Common myeloid progenitor, CD34-positive (primary cell): ENCODE measurements at regions of chr5 and their contacts with region 1.

Region 1: GRCh38 chr5:138503487-138504270 is 38.4 kb downstream of the EGR1 start:
- DNase-seq: peak; percentile 66 to 87 (median 78)
- H3K4me3 ChIP-seq: no peak overlapping the region
- H3K27ac ChIP-seq: no peak overlapping the region
- H3K4me1 ChIP-seq: no peaks in the 10 kb centered on the region
- H3K27me3 ChIP-seq: no peaks in the 10 kb centered on the region

Region 2: DNA sequence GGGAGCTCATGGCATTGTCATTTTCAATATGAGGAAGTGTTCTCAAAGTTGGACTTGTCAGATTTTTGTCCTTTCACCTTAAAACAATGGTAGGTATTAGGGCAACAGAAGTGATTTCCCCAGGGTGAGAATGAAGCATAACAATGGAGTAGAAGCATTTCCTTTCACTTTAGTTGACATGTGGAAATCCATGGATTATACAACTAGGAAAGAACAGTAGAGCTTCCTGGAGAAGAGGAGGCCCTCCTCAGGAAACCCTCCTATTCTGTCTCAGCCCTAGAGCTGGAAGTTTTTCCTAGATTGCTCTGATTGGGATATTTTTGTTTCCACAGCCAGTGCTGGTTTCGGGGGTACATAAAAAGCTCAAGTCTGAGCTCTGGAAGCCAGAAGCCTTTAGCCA is 78.6 kb before region 1 on chr5:
- CTCF ChIA-PET with region 1: no interaction called
- POLR2A ChIA-PET with region 1: no interaction called
- DNase-seq: no peak
- H3K4me3 ChIP-seq: no peak overlapping the region
- H3K27ac ChIP-seq: no peak overlapping the region
- H3K4me1 ChIP-seq: no peaks in the 10 kb centered on the region
- H3K27me3 ChIP-seq: no peaks in the 10 kb centered on the region

Region 3: GRCh38 chr5:138464008-138464387 is 39.7 kb before region 1 on chr5:
- CTCF ChIA-PET with region 1: interaction called, 494 read pairs
- POLR2A ChIA-PET with region 1: interaction called, 15 read pairs
- DNase-seq: peak; percentile 95 to 97 (median 95)
- H3K4me3 ChIP-seq: peak overlapping the region; percentile 73 to 89 (median 80)
- H3K27ac ChIP-seq: peak overlapping the region; percentile 66 to 88
- H3K4me1 ChIP-seq: peaks cover 2 to 43% (median 36%) of the 10 kb centered on the region in 4 experiments
- H3K27me3 ChIP-seq: peaks cover 0 to 24% (median 8%) of the 10 kb centered on the region in 5 experiments

Region 4: DNA sequence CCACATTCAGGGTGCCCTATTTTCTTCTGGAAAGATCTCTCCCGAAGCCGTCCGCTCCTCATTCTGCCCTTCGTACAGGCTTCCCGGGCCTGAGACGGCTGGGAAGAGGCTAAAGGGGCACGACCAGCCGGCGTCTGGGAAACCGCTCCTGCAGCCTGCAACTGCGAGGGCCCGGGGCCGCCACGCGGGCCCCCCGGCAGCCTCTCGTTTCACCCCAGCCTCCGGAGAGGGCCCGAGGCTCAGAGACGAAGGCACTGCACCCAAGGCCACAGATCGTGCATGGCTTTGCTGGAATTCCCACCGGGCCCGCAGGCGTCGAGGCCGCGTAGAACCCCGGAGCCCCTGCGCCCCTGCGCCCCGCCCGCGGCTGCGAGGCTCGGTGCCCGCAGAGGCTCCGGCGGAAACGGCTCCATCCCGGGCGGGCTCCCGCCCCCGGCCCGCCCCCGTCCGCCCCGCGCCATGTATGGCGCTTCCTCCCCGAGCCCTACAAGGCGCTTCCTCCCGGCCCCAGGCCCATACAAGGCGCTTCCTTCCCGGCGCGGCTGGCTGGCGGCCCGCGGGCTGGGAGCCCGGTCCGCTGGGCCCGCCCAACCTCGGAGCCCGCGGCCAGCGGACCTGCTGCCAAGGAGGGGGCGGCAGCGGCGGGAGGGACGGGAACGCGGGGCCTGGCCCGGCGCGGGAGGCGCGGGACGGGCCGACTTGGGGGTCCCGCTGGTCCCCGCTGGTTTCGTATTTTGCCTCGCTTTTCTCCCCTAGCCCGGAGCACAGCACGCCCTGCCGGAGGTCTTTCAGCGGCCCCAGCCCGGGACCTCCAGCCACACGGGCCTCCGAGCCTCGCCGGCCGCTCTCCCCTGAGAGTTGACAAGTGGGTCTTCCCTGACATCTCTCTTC is 11.8 kb before region 1 on chr5:
- CTCF ChIA-PET with region 1: interaction called, 17 read pairs
- POLR2A ChIA-PET with region 1: no interaction called
- DNase-seq: peak; percentile 82 to 91 (median 88)
- H3K4me3 ChIP-seq: peak overlapping the region; percentile 24 to 78 (median 64)
- H3K27ac ChIP-seq: peak overlapping the region in 1 of 2 experiments; percentile 26
- H3K4me1 ChIP-seq: peaks cover 0 to 18% (median 17%) of the 10 kb centered on the region in 4 experiments
- H3K27me3 ChIP-seq: peaks cover 9 to 38% (median 12%) of the 10 kb centered on the region in 5 experiments

Region 5: GRCh38 chr5:138515556-138516245 is 12.0 kb after region 1 on chr5:
- CTCF ChIA-PET with region 1: interaction called, 52 read pairs
- POLR2A ChIA-PET with region 1: no interaction called
- DNase-seq: no peak
- H3K4me3 ChIP-seq: no peak overlapping the region
- H3K27ac ChIP-seq: no peak overlapping the region
- H3K4me1 ChIP-seq: no peaks in the 10 kb centered on the region
- H3K27me3 ChIP-seq: no peaks in the 10 kb centered on the region

Region 6: GRCh38 chr5:138552700-138553099 is 49.0 kb after region 1 on chr5:
- CTCF ChIA-PET with region 1: interaction called, 14 read pairs
- POLR2A ChIA-PET with region 1: interaction called, 3 read pairs
- DNase-seq: no peak
- H3K4me3 ChIP-seq: no peak overlapping the region
- H3K27ac ChIP-seq: no peak overlapping the region
- H3K4me1 ChIP-seq: no peaks in the 10 kb centered on the region
- H3K27me3 ChIP-seq: no peaks in the 10 kb centered on the region

Region 7: DNA sequence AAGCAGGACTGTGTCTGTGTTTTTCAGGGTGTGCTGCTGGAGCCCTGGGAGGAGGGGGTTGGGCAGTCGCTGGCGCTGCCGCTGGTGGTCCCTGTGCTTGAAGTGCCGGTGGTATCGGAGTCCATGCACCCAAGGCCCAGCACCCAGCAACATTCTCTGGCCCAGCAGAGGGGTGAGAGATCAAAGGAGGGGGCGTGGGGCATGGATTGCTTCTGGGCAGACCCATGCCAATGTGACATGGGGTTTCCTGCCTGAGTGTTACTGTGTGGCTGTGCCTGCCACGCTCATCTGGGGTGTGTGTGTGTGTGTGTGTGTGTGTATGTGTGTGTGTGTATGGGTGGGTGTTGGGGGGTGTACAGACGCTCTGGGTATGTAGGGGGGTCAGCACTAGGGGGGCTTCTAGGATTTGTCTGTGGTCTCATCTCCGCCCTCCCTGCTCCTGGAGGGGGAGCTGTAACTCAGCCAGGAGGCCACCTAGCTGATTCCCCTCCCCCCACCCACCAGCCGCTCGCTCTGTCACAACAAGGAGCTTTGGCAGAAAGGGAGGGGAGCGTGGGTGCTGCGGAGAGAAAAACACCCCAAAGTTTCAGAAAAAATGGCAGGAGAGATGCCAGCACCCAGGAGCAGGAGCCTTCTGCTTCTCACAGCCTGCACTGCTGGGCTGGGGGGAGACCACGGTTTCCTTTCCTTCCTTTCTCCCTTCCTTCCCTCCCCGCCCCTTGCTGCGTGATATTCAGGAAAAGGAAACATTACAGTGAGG is 107.4 kb after region 1 on chr5:
- CTCF ChIA-PET with region 1: no interaction called
- POLR2A ChIA-PET with region 1: no interaction called
- DNase-seq: peak; percentile 30 to 64 (median 57)
- H3K4me3 ChIP-seq: peak overlapping the region; percentile 15 to 77 (median 53)
- H3K27ac ChIP-seq: no peak overlapping the region
- H3K4me1 ChIP-seq: peaks cover 0 to 17% (median 14%) of the 10 kb centered on the region in 4 experiments
- H3K27me3 ChIP-seq: no peaks in the 10 kb centered on the region

Region 8: GRCh38 chr5:138632900-138633489 is 129.3 kb after region 1 on chr5:
- CTCF ChIA-PET with region 1: no interaction called
- POLR2A ChIA-PET with region 1: no interaction called
- DNase-seq: peak; percentile 70 to 88 (median 87)
- H3K4me3 ChIP-seq: no peak overlapping the region
- H3K27ac ChIP-seq: no peak overlapping the region
- H3K4me1 ChIP-seq: no peaks in the 10 kb centered on the region
- H3K27me3 ChIP-seq: peaks cover 0 to 3% (median 0%) of the 10 kb centered on the region in 5 experiments